A549 (cell line): ENCODE measurements at regions of chr15 and their contacts with region 1.

Region 1: DNA sequence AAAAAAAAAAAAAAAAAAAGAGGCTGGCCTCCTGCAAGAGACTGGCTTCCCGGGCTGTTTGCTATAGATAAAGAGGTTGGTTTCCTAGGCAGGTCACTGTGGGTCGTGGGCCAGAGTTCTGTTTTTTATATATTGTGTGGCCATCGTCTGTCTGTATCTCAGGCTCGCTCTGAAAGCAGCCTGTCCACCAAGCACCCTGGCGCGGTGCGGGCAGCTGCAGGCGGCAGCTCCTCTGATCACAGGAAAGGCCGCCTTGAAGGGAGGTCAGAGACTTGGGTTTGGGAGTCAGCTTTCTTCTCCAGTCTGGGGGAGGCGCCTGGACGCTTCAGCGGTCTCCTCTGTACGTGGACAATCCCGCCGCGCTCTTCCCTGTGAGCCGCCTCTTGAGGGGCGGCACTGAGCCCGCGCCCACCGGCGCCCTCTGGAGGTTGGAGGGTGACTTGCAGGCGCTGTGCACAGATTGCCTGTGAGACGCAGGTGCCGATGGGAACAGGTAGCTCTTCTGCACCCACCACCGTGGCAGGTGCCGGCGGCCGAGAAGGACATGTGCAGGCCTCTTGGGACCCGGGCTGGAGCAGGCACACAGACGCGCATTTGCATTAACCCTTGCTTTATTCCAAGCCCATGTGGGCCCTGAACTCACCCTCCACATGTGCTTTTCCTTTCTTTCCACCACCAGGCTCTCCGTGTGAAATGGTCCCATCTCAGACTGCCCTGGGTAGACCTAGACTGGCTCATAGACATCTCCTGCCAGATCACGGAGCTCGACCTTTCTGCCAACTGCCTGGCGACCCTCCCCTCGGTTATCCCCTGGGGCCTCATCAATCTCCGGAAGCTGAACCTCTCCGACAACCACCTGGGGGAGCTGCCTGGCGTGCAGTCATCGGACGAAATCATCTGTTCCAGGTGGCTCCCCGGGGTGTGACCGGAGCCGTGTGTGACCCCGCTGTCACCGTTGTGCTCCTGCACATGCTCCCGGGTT is 89.3 kb downstream of the LRRK1 start:
- DNase-seq: peak; percentile 87 to 89
- ATAC-seq: peak; percentile 86 to 92
- H3K4me3 ChIP-seq: peak overlapping the region; percentile 55
- H3K27ac ChIP-seq: peak overlapping the region; percentile 81 to 82
- H3K4me1 ChIP-seq: peaks cover 13% of the 10 kb centered on the region; the same call in 2 of the 3 replicates
- CTCF ChIP-seq: peak; percentile 94
- EP300 ChIP-seq: no peak
- POLR2A ChIP-seq: peak; percentile 52
- RAD21 ChIP-seq: peak; percentile 58 to 59

Region 2: GRCh38 chr15:100627789-100628395 is 380.6 kb before region 1 on chr15:
- CTCF ChIA-PET with region 1: interaction called, 26 read pairs
- POLR2A ChIA-PET with region 1: interaction called, 4 read pairs
- DNase-seq: peak; percentile 58 to 84
- ATAC-seq: peak; percentile 88 to 95
- H3K4me3 ChIP-seq: no peak overlapping the region
- H3K27ac ChIP-seq: no peak overlapping the region
- H3K4me1 ChIP-seq: no peaks in the 10 kb centered on the region
- CTCF ChIP-seq: peak; percentile 96
- EP300 ChIP-seq: no peak
- POLR2A ChIP-seq: no peak
- RAD21 ChIP-seq: peak; percentile 93

Region 3: GRCh38 chr15:100829457-100829856 is 179.0 kb before region 1 on chr15:
- CTCF ChIA-PET with region 1: no interaction called
- POLR2A ChIA-PET with region 1: no interaction called
- DNase-seq: no peak
- ATAC-seq: no peak
- H3K4me3 ChIP-seq: no peak overlapping the region
- H3K27ac ChIP-seq: no peak overlapping the region
- H3K4me1 ChIP-seq: no peaks in the 10 kb centered on the region
- CTCF ChIP-seq: no peak
- EP300 ChIP-seq: no peak
- POLR2A ChIP-seq: no peak
- RAD21 ChIP-seq: no peak

Region 4: DNA sequence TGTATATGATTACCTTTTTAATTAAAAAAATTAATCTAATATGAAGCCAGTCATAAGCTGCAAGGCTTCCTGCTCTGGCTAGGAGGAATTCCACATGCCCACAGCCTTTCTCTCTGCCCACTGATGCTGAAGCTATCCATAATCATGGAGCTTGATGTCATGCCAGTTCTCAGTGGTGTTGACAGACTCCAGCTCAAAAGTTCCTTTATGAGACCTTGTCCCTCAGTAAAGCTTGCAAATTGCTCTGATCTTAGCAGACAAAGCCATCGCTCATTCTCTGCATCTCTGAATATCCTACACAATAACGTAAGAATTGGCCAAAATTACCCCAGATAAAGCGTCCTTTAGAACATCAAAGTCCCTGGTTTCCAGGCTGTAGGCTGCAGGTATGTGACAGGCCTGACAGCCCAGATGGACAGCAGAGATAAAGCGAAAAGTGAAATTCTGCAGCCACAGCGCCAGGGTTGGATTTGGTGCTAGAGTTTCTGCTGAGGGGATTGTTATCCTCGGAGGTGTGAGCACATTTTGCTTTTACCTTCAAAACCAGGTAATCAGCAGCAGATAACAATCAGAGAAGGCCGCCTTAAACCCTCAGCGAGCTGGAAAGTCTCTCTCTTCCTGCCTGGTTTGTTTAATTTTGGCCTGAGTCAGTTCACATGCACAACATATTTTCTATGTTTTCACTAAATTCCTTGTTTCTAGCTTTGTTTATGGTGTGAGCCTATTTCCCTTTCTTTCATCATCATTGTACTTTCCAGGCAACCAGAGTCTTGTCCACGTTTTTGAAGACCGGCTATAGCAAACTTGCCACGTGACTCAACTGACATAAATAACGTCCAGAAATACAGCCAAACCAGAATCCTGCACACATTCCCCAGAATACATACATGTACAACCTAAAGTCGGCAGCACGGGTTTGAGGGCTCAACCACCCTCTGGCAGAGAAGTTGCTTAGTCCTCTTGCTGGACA is 165.4 kb before region 1 on chr15:
- CTCF ChIA-PET with region 1: interaction called, 11 read pairs
- POLR2A ChIA-PET with region 1: no interaction called
- DNase-seq: no peak
- ATAC-seq: peak in 1 of 2 experiments; percentile 40; a peak in 1 of 6 replicates
- H3K4me3 ChIP-seq: no peak overlapping the region
- H3K27ac ChIP-seq: no peak overlapping the region; a peak in 1 of 6 replicates
- H3K4me1 ChIP-seq: peaks cover 6% of the 10 kb centered on the region; the same call in 1 of the 3 replicates
- CTCF ChIP-seq: no peak
- EP300 ChIP-seq: no peak
- POLR2A ChIP-seq: no peak
- RAD21 ChIP-seq: no peak

Region 5: GRCh38 chr15:100889385-100890050 is 118.9 kb before region 1 on chr15:
- CTCF ChIA-PET with region 1: interaction called, 28 read pairs
- POLR2A ChIA-PET with region 1: no interaction called
- DNase-seq: no peak
- ATAC-seq: no peak; a peak in 1 of 6 replicates
- H3K4me3 ChIP-seq: no peak overlapping the region
- H3K27ac ChIP-seq: no peak overlapping the region
- H3K4me1 ChIP-seq: no peaks in the 10 kb centered on the region
- CTCF ChIP-seq: no peak
- EP300 ChIP-seq: no peak
- POLR2A ChIP-seq: no peak
- RAD21 ChIP-seq: no peak

Region 6: DNA sequence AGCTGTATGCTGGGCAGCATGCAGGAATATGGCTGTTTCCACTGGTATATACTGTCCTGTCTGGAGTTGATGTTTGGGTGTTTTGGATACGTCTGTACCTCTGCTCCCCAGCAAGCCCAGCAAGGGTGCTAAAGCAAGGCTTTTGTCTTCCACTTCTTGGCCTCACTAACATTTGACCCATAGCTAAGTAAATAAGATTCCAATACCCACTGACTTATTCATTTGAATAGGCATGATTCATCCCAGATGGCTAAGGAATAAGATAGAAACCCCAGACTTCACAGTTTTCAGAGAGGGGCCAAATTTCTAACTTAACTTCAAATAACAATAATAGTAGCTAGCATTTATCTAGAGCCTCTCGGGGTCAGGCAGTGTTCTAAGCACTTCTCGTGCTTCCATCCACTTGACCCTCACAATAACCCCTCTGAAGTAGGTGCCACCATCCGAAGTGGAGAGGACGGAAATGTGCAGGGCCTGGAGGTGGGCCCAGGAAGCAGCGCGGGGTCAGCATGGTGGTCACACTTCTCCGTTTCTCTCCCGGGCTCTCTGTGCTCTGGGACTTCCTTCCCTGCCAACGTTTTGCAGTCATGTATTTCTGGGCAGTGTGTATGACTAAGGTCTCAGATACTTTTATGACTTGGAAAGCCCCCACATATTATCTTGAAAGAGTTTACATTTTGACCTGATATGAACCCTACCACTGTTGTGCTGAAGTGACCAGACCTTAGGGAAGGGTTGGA is 50.0 kb before region 1 on chr15:
- CTCF ChIA-PET with region 1: interaction called, 46 read pairs
- POLR2A ChIA-PET with region 1: interaction called, 3 read pairs
- DNase-seq: peak; percentile 77 to 90
- ATAC-seq: peak; percentile 84 to 90
- H3K4me3 ChIP-seq: peak overlapping the region; percentile 30
- H3K27ac ChIP-seq: peak overlapping the region; percentile 81 to 93
- H3K4me1 ChIP-seq: peaks cover 42% of the 10 kb centered on the region
- CTCF ChIP-seq: no peak
- EP300 ChIP-seq: peak; percentile 27 to 59; a peak in 2 of 5 replicates
- POLR2A ChIP-seq: peak; percentile 32
- RAD21 ChIP-seq: peak; percentile 14 to 20; a peak in 2 of 5 replicates

Region 7: DNA sequence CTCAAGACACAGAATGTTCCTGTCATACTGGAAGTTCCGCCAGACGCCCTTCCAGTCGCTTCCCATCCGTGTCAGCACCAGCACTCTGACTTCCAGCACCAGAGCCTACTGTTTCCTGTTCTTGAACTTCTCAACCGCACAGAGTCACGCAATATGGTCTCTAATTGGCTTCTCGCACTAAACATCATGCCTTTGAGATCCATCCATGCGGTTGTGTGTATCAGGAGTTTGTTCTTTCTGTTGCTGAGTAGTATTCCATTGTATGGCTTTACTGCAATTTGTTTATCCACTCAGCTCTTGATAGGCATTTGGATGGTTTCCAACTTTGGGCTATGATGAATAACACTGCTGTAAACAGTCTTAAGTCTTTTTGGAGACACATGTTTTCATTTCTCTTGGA is 22.8 kb after region 1 on chr15:
- CTCF ChIA-PET with region 1: interaction called, 15 read pairs
- POLR2A ChIA-PET with region 1: no interaction called
- DNase-seq: no peak
- ATAC-seq: no peak
- H3K4me3 ChIP-seq: no peak overlapping the region
- H3K27ac ChIP-seq: no peak overlapping the region
- H3K4me1 ChIP-seq: no peaks in the 10 kb centered on the region
- CTCF ChIP-seq: no peak
- EP300 ChIP-seq: no peak
- POLR2A ChIP-seq: no peak
- RAD21 ChIP-seq: no peak

Region 8: GRCh38 chr15:101143316-101143715 is 134.9 kb after region 1 on chr15:
- CTCF ChIA-PET with region 1: no interaction called
- POLR2A ChIA-PET with region 1: no interaction called
- DNase-seq: no peak
- ATAC-seq: no peak
- H3K4me3 ChIP-seq: no peak overlapping the region
- H3K27ac ChIP-seq: no peak overlapping the region
- H3K4me1 ChIP-seq: no peaks in the 10 kb centered on the region
- CTCF ChIP-seq: no peak
- EP300 ChIP-seq: no peak
- POLR2A ChIP-seq: no peak
- RAD21 ChIP-seq: no peak

Region 9: DNA sequence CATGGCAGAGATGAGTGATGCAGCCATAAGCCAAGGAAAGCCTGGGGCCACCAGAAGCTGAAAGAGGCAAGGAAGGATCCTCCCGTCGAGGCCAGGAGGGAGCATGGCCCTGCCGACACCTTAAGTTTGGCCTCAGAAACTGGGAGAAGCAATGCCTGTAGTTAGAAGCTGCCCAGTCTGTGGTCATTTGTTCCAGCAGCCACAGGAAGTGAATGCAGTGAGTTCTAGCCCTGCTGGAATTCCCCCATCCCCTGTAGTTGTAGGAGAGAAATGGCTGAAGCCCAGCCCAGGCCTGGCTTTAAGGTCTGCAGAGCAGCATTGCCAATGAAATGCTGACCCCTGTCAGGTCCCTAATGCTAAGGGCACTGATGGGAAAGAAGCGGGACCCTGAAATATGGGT is 255.6 kb after region 1 on chr15:
- CTCF ChIA-PET with region 1: interaction called, 216 read pairs
- POLR2A ChIA-PET with region 1: no interaction called
- DNase-seq: no peak
- ATAC-seq: no peak
- H3K4me3 ChIP-seq: no peak overlapping the region
- H3K27ac ChIP-seq: no peak overlapping the region
- H3K4me1 ChIP-seq: no peaks in the 10 kb centered on the region
- CTCF ChIP-seq: no peak
- EP300 ChIP-seq: no peak
- POLR2A ChIP-seq: no peak
- RAD21 ChIP-seq: no peak